GM23248 (cell line): ENCODE measurements at regions of chr1 and their contacts with region 1.

Region 1: DNA sequence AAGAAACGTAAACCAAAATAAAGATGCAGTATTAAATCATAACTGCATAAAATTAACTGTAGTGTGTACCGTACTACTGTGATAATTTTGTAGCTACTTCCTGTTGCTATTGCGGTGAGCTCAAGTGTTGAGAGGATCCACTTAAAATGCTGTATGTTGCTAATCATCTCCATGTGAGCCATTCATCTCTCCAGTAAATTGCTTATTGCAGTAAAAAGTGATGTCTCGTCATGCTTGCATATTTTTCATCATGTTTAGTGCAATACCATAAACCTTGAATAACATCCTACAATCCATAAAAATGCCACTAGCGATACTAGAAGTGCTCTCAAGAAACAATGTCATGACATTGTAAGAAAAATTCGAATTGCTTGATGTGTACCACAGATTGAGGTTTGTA is 66.3 kb downstream of the RAVER2 start:
- DNase-seq: no peak
- H3K4me3 ChIP-seq: no peak overlapping the region
- H3K27ac ChIP-seq: no peak overlapping the region
- H3K4me1 ChIP-seq: no peaks in the 10 kb centered on the region
- H3K27me3 ChIP-seq: no peaks in the 10 kb centered on the region

Region 2: DNA sequence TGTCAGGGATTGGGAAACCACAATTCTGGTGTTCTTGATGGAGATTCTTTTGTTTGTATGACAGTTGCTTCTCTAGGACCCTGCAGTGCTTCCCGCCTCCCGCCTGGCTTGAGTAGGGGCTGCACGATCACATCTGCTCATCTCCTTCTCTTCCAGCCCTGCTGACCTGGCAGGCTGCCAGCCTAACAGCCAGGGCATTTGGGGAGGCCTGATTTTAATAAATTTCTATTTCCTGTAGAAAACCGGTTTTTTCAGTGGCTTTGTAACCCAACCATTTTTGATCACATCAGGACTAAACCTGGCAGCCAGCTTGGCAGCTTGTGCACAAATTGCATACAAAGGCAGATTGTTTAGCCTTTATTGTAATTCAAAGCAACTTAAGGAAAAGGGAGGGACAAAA is 528.8 kb before region 1 on chr1:
- in situ Hi-C with region 1: loop called (anchors 10 kb)
- DNase-seq: no peak
- H3K4me3 ChIP-seq: no peak overlapping the region
- H3K27ac ChIP-seq: no peak overlapping the region
- H3K4me1 ChIP-seq: no peaks in the 10 kb centered on the region
- H3K27me3 ChIP-seq: no peaks in the 10 kb centered on the region

Region 3: GRCh38 chr1:64691626-64692025 is 119.5 kb before region 1 on chr1:
- in situ Hi-C with region 1: loop called (anchors 10 kb)
- DNase-seq: peak; percentile 13
- H3K4me3 ChIP-seq: no peak overlapping the region
- H3K27ac ChIP-seq: no peak overlapping the region
- H3K4me1 ChIP-seq: peaks cover 15% of the 10 kb centered on the region; the same call in 1 of the 2 replicates
- H3K27me3 ChIP-seq: no peaks in the 10 kb centered on the region